Naive thymus-derived CD4-positive, alpha-beta T cell (primary cell): ENCODE measurements at regions of chr7 and their contacts with region 1.

Region 1: GRCh38 chr7:101815835-101816493 is 1.5 kb upstream of the CUX1 start:
- DNase-seq: peak; percentile 61 to 77 (median 73)
- ATAC-seq: peak; percentile 87
- H3K4me3 ChIP-seq: peak overlapping the region; percentile 47
- H3K4me3 Mint-ChIP-seq: peak overlapping the region; percentile 63 to 90 (median 84)
- H3K27ac ChIP-seq: peak overlapping the region; percentile 54
- H3K27ac Mint-ChIP-seq: peak overlapping the region in 5 of 9 donors; percentile 34 to 84 (median 67)
- H3K4me1 ChIP-seq: peaks cover 0 to 4% of the 10 kb centered on the region in 2 donors
- H3K4me1 Mint-ChIP-seq: peaks cover 12 to 47% (median 32%) of the 10 kb centered on the region in 7 donors
- H3K27me3 ChIP-seq: no peaks in the 10 kb centered on the region
- H3K27me3 Mint-ChIP-seq: peaks cover 0 to 46% (median 0%) of the 10 kb centered on the region in 5 donors

Region 2: DNA sequence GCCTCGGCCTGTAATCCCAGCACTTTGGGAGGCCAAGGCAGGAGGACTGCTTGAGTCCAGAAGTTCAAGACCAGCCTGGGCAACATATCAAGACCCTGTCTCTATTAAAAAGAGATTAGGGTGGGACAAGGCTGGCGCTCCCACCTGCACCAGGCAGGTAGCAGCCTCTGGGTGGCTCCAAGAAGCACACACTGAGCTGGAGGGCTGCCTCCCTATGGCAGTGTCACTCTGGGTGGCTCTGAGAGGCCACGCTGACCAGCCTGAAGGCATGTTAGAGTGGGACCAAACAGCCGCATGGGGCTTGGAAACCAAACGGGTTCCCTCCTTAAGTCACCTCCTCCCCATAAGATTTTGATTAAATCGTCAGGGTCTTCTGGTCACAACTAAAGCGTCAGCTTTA is 473.1 kb before region 1 on chr7:
- CTCF ChIA-PET with region 1: no interaction called
- POLR2A ChIA-PET with region 1: no interaction called
- intact Hi-C with region 1: no loop called
- DNase-seq: no peak
- ATAC-seq: no peak
- H3K4me3 ChIP-seq: no peak overlapping the region
- H3K4me3 Mint-ChIP-seq: no peak overlapping the region
- H3K27ac ChIP-seq: no peak overlapping the region
- H3K27ac Mint-ChIP-seq: no peak overlapping the region
- H3K4me1 ChIP-seq: no peaks in the 10 kb centered on the region
- H3K4me1 Mint-ChIP-seq: peaks cover 0 to 2% (median 0%) of the 10 kb centered on the region in 7 donors
- H3K27me3 ChIP-seq: no peaks in the 10 kb centered on the region
- H3K27me3 Mint-ChIP-seq: no peaks in the 10 kb centered on the region

Region 3: DNA sequence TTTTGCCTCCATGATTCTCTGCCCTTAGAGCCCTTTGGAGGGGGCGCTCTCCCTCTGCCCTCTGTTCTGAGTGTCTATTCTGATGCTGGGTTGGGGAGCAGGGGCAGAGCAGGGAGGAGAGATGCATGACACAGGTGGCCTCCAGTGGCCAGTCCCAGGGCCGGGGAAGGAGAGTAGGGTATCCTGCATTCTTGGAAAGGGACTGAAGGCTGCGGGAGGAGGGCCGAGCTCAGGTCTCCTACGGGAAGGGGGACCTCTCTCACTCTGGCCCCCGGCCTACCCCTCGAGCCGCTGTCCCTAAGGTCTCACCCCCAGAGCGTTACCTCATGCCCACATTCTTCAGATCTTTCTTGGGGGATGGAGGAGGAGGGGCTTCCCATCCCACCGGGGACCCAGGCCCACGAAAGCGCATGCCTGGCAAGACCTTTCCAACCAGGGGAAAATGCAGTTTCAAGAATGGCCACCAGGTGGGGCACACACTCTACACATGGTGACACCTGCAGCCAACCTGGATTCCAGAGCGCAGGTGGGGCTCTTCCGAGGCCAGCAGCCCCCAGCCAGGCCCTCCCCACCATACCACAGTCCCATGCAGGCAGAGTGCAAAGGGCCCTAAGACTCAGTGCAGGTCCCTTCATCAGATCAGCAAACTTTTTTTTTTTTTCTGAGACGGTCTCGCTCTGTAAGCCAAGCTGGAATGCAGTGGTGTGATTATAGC is 273.3 kb before region 1 on chr7:
- CTCF ChIA-PET with region 1: no interaction called
- POLR2A ChIA-PET with region 1: no interaction called
- intact Hi-C with region 1: loop called in 1 of 2 experiments (anchors 2 kb)
- DNase-seq: peak; percentile 36 to 77 (median 61)
- ATAC-seq: peak; percentile 71
- H3K4me3 ChIP-seq: no peak overlapping the region
- H3K4me3 Mint-ChIP-seq: no peak overlapping the region
- H3K27ac ChIP-seq: no peak overlapping the region
- H3K27ac Mint-ChIP-seq: no peak overlapping the region
- H3K4me1 ChIP-seq: no peaks in the 10 kb centered on the region
- H3K4me1 Mint-ChIP-seq: peaks cover 0 to 5% (median 0%) of the 10 kb centered on the region in 7 donors
- H3K27me3 ChIP-seq: no peaks in the 10 kb centered on the region
- H3K27me3 Mint-ChIP-seq: peaks cover 0 to 5% (median 0%) of the 10 kb centered on the region in 5 donors

Region 4: GRCh38 chr7:101688183-101688831 is 127.7 kb before region 1 on chr7:
- CTCF ChIA-PET with region 1: interaction called, 3 read pairs
- POLR2A ChIA-PET with region 1: no interaction called
- intact Hi-C with region 1: loop called (anchors 1 kb)
- DNase-seq: peak; percentile 47 to 89 (median 75)
- ATAC-seq: peak; percentile 90
- H3K4me3 ChIP-seq: no peak overlapping the region
- H3K4me3 Mint-ChIP-seq: peak overlapping the region in 1 of 10 donors; percentile 47
- H3K27ac ChIP-seq: no peak overlapping the region
- H3K27ac Mint-ChIP-seq: no peak overlapping the region
- H3K4me1 ChIP-seq: no peaks in the 10 kb centered on the region
- H3K4me1 Mint-ChIP-seq: peaks cover 0 to 10% (median 0%) of the 10 kb centered on the region in 7 donors
- H3K27me3 ChIP-seq: no peaks in the 10 kb centered on the region
- H3K27me3 Mint-ChIP-seq: no peaks in the 10 kb centered on the region

Region 5: GRCh38 chr7:101804967-101805366 is 11.0 kb before region 1 on chr7:
- CTCF ChIA-PET with region 1: interaction called, 4 read pairs
- POLR2A ChIA-PET with region 1: interaction called, 6 read pairs
- intact Hi-C with region 1: loop called in 1 of 2 experiments (anchors 1 kb)
- DNase-seq: peak in 5 of 9 donors; percentile 11 to 25 (median 16)
- ATAC-seq: peak; percentile 42
- H3K4me3 ChIP-seq: no peak overlapping the region
- H3K4me3 Mint-ChIP-seq: peak overlapping the region in 9 of 10 donors; percentile 20 to 86 (median 75)
- H3K27ac ChIP-seq: no peak overlapping the region
- H3K27ac Mint-ChIP-seq: peak overlapping the region in 8 of 9 donors; percentile 3 to 76 (median 26)
- H3K4me1 ChIP-seq: peaks cover 7 to 22% of the 10 kb centered on the region in 2 donors
- H3K4me1 Mint-ChIP-seq: peaks cover 14 to 34% (median 28%) of the 10 kb centered on the region in 7 donors
- H3K27me3 ChIP-seq: no peaks in the 10 kb centered on the region
- H3K27me3 Mint-ChIP-seq: peaks cover 0 to 31% (median 13%) of the 10 kb centered on the region in 5 donors

Region 6: DNA sequence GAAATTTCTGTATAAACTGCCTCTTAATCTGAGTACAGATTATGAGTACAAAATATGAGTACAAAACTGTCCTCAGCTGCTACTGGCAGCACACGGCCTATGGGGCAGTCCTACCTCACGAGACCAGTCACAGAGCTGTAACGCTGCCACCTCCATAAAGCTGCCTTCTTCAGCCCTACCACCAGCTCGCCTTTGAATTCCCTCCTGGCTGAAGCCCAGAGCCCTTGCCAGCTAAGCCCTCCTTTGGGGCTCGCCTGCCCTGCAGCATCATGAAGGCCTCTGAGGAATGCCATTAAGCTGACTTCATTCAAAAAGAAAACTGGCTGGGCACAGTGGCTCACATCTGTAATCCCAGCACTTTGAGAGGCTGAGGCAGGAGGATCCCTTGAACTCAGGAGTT is 290.7 kb after region 1 on chr7:
- CTCF ChIA-PET with region 1: no interaction called
- POLR2A ChIA-PET with region 1: no interaction called
- intact Hi-C with region 1: loop called in 1 of 2 experiments (anchors 10 kb)
- DNase-seq: no peak
- ATAC-seq: no peak
- H3K4me3 ChIP-seq: no peak overlapping the region
- H3K4me3 Mint-ChIP-seq: no peak overlapping the region
- H3K27ac ChIP-seq: no peak overlapping the region
- H3K27ac Mint-ChIP-seq: peak overlapping the region in 1 of 9 donors; percentile 31
- H3K4me1 ChIP-seq: no peaks in the 10 kb centered on the region
- H3K4me1 Mint-ChIP-seq: peaks cover 0 to 2% (median 0%) of the 10 kb centered on the region in 7 donors
- H3K27me3 ChIP-seq: no peaks in the 10 kb centered on the region
- H3K27me3 Mint-ChIP-seq: no peaks in the 10 kb centered on the region

Region 7: DNA sequence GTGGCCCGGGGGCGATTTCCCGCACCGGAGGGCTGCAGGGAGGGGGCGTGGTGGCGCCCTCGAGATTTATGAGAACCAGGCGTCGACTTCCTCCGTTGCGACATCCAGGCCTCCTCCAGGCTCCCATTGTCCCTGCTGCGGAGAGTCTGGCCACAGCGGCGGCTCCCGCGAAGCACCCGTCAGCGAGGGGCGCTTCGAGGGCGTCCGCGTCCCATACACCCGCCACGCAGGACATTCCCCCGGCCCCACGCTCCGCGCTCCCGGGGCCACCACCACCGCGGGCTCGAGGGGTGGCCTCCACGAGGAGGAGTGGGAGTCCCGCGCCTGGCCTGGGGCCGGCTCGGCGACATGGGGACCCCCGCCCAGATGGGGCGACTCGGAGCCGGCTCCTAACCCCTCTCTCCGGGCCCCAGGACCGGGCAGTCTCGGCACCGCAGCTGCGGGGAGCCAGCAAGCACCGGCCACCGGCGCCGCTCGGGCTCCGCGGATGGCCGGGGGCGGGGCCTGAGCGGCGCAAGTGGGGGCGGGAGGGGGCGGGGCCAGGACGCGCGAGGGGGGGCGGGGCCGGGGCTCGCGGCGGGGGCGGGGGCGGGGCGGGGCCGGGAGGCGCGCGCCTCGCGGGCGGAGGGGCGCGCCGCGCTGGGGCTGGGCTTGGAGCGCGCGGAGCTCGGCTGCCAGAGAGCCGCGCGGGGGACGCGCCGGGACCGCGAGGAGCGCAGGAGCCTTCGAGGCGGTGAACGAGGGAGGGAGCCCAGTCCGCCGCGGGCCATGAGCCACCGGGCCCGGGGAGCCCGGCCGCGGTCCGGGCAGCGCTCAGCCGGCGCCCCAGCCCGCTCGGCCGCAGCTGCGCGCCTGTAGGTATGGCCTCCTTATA is 470.5 kb after region 1 on chr7 and contains the start of gene SH2B2:
- CTCF ChIA-PET with region 1: no interaction called
- POLR2A ChIA-PET with region 1: no interaction called
- intact Hi-C with region 1: loop called in 1 of 2 experiments (anchors 5 kb)
- DNase-seq: peak; percentile 31 to 62 (median 50)
- ATAC-seq: peak; percentile 73
- H3K4me3 ChIP-seq: peak within 1 kb of the TSS; percentile 67
- H3K4me3 Mint-ChIP-seq: peak within 1 kb of the TSS; percentile 71 to 88 (median 80)
- H3K27ac ChIP-seq: peak within 1 kb of the TSS; percentile 61
- H3K27ac Mint-ChIP-seq: peak within 1 kb of the TSS in 4 of 9 donors; percentile 33 to 73 (median 67)
- H3K4me1 ChIP-seq: peaks cover 16 to 17% of the 10 kb centered on the region in 2 donors
- H3K4me1 Mint-ChIP-seq: peaks cover 16 to 37% (median 31%) of the 10 kb centered on the region in 7 donors
- H3K27me3 ChIP-seq: no peaks in the 10 kb centered on the region
- H3K27me3 Mint-ChIP-seq: peaks cover 0 to 22% (median 0%) of the 10 kb centered on the region in 5 donors
- total RNA-seq, gene SH2B2: 0.87 to 10.9 (median 2.0) TPM